ENCODE measurements at regions of chr7 and their contacts with region 1.

Region 1: DNA sequence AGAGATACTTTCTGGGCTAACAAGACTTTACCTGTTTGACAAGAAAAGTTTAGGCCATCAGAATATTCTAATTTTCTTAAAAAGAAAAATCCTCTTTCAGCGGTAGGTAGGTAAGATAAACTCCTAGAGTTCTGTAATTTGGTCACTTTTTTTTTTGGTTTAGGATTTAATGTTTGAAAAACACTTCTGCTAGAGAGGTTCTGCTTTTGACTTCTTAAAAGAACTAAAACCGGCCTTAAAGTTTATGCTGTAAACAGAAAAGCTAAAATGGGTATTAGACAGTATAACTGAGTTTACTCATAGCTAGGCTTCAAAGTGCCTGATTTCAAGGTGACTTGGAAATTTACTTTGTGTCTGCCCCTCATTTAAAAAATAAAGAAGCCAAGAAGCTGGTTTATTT is 21.7 kb upstream of the KMT2E start:
- DNase-seq: no peak
- H3K4me3 ChIP-seq: no peak overlapping the region
- H3K27ac ChIP-seq: no peak overlapping the region
- H3K4me1 ChIP-seq: peaks cover 17% of the 10 kb centered on the region
- H3K27me3 ChIP-seq: no peaks in the 10 kb centered on the region
- CTCF ChIP-seq: no peak

Region 2: GRCh38 chr7:104956753-104957450 is 35.4 kb before region 1 on chr7:
- CTCF ChIA-PET with region 1: interaction called, 10 read pairs
- POLR2A ChIA-PET with region 1: no interaction called
- intact Hi-C with region 1: no loop called
- DNase-seq: no peak
- H3K4me3 ChIP-seq: no peak overlapping the region
- H3K27ac ChIP-seq: no peak overlapping the region
- H3K4me1 ChIP-seq: no peaks in the 10 kb centered on the region
- H3K27me3 ChIP-seq: no peaks in the 10 kb centered on the region
- CTCF ChIP-seq: no peak

Region 3: DNA sequence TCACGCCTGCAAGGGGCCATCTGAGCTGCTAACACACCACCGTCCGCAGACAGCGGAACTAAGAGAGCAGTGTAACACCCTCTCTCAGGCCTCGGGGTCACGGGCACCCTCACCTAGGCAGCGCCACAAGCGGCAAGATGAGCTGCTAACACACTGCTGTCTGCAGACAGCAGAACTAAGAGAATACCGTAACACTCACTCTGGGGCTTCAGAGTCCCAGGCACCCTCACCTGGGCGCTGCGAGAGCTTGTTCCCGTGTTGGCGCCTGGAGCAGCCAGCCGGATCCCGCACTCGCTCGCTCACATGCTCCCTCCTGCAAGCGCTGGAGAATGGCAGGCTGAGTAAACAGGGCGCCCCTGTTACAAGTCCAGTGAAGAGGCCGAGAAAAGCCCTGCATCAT is 236.2 kb after region 1 on chr7:
- CTCF ChIA-PET with region 1: no interaction called
- POLR2A ChIA-PET with region 1: no interaction called
- intact Hi-C with region 1: no loop called
- DNase-seq: no peak
- H3K4me3 ChIP-seq: no peak overlapping the region
- H3K27ac ChIP-seq: no peak overlapping the region
- H3K4me1 ChIP-seq: peaks cover 33% of the 10 kb centered on the region
- H3K27me3 ChIP-seq: no peaks in the 10 kb centered on the region
- CTCF ChIP-seq: no peak